Aorta (tissue), 5 donors: ENCODE measurements at regions of chr3 and their contacts with region 1.

Region 1: GRCh38 chr3:146250449-146251382 is at the start of gene PLSCR4:
- DNase-seq: peak; percentile 89 to 94
- ATAC-seq: peak; percentile 97
- H3K4me3 ChIP-seq: peak within 1 kb of the TSS; percentile 63 to 97
- H3K27ac ChIP-seq: peak within 1 kb of the TSS; percentile 78 to 93
- H3K4me1 ChIP-seq: peaks cover 0 to 2% of the 10 kb centered on the region in 2 donors
- H3K27me3 ChIP-seq: no peaks in the 10 kb centered on the region
- total RNA-seq, gene PLSCR4: 69.7 to 135 TPM

Region 2: GRCh38 chr3:145776782-145777408 is 473.8 kb before region 1 on chr3:
- intact Hi-C with region 1: no loop called
- DNase-seq: no peak
- ATAC-seq: no peak
- H3K4me3 ChIP-seq: no peak overlapping the region
- H3K27ac ChIP-seq: no peak overlapping the region
- H3K4me1 ChIP-seq: no peaks in the 10 kb centered on the region
- H3K27me3 ChIP-seq: no peaks in the 10 kb centered on the region

Region 3: DNA sequence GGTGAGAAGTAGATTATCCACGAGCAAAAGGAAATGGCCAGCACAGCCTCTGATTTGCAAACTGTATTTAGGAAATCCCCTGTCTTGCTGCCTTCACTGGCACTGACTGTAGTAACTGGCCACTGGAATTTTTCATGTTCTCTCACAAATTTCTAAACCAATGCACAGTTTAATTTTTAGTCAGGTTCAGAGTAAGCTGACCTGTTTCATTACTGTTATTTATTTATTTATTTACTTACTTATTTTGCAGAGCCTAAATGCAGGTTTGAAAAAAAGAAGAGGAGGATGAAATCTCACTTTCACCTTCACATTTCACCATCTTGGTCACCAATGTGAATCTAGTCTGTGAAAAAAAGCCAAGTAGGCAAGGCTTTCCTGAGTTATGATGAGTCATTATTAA is 380.8 kb before region 1 on chr3:
- intact Hi-C with region 1: no loop called
- DNase-seq: no peak
- ATAC-seq: no peak
- H3K4me3 ChIP-seq: no peak overlapping the region
- H3K27ac ChIP-seq: no peak overlapping the region
- H3K4me1 ChIP-seq: peaks cover 0 to 3% of the 10 kb centered on the region in 2 donors
- H3K27me3 ChIP-seq: no peaks in the 10 kb centered on the region

Region 4: GRCh38 chr3:146277953-146278631 is 27.4 kb after region 1 on chr3:
- intact Hi-C with region 1: loop called in 1 of 2 experiments (anchors 2 kb)
- DNase-seq: no peak
- ATAC-seq: peak; percentile 81
- H3K4me3 ChIP-seq: no peak overlapping the region
- H3K27ac ChIP-seq: peak overlapping the region; percentile 76 to 90
- H3K4me1 ChIP-seq: peaks cover 2 to 10% of the 10 kb centered on the region in 2 donors
- H3K27me3 ChIP-seq: no peaks in the 10 kb centered on the region

Region 5: GRCh38 chr3:146308682-146309081 is 58.0 kb after region 1 on chr3:
- intact Hi-C with region 1: loop called in 1 of 2 experiments (anchors 1 kb)
- DNase-seq: no peak
- ATAC-seq: peak; percentile 76
- H3K4me3 ChIP-seq: no peak overlapping the region
- H3K27ac ChIP-seq: peak overlapping the region; percentile 28 to 87
- H3K4me1 ChIP-seq: peaks cover 2 to 3% of the 10 kb centered on the region in 2 donors
- H3K27me3 ChIP-seq: no peaks in the 10 kb centered on the region